GM10248 (cell line): ENCODE measurements at regions of chr11 and their contacts with region 1.

Region 1: GRCh38 chr11:94613120-94613519 is 46.0 kb downstream of the PIWIL4 start:
- DNase-seq: no peak
- CTCF ChIP-seq: no peak

Region 2: DNA sequence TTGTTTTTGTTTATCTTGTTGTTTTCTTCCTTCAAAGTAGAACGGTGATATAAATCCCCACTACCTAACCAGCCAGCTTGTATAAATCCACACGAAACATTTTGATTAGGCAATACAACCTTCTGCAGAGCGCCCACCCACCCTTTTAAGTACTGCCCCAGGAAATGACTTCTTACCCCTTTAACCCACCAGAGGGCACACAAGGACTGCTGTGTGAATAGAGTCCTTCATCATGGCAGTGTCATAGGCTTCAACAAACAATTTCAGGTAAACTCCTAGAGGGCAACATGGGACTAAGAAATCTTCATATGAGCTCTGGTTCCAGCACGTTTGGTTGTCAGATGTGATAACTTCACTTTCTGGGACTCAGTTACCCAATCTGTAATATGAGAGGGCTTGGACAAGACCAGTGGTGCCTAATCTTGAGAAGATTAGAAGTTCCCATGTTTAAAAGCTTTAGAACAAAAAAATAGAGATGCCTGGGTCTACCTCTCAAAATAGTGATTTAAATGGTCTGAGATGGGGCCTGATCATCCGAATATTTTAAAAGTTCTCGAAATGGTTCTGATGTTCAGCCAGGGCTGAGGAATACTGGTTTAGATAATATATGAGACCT is 10.1 kb after region 1 on chr11:
- CTCF ChIA-PET with region 1: interaction called, 25 read pairs
- POLR2A ChIA-PET with region 1: no interaction called
- DNase-seq: peak; percentile 64
- CTCF ChIP-seq: no peak

Region 3: GRCh38 chr11:94734563-94735275 is 121.6 kb after region 1 on chr11:
- CTCF ChIA-PET with region 1: no interaction called
- POLR2A ChIA-PET with region 1: no interaction called
- DNase-seq: no peak
- CTCF ChIP-seq: no peak